ENCODE measurements at regions of chr20 and their contacts with region 1.

Region 1: GRCh38 chr20:21719592-21720214 is 14.2 kb downstream of the PAX1 start:
- DNase-seq: peak; percentile 33
- H3K4me3 ChIP-seq: no peak overlapping the region
- H3K27ac ChIP-seq: no peak overlapping the region
- H3K4me1 ChIP-seq: no peaks in the 10 kb centered on the region
- H3K27me3 ChIP-seq: peaks cover 12% of the 10 kb centered on the region
- CTCF ChIP-seq: peak; percentile 67 to 83

Region 2: GRCh38 chr20:21921251-21921650 is 201.5 kb after region 1 on chr20:
- CTCF ChIA-PET with region 1: no interaction called
- dilution Hi-C with region 1: no loop called
- in situ Hi-C with region 1: no loop called
- intact Hi-C with region 1: no loop called
- DNase-seq: no peak
- H3K4me3 ChIP-seq: no peak overlapping the region
- H3K27ac ChIP-seq: no peak overlapping the region
- H3K4me1 ChIP-seq: no peaks in the 10 kb centered on the region
- H3K27me3 ChIP-seq: no peaks in the 10 kb centered on the region
- CTCF ChIP-seq: no peak

Region 3: GRCh38 chr20:22127587-22127986 is 407.9 kb after region 1 on chr20:
- CTCF ChIA-PET with region 1: no interaction called
- dilution Hi-C with region 1: no loop called
- in situ Hi-C with region 1: no loop called
- intact Hi-C with region 1: no loop called
- DNase-seq: no peak
- H3K4me3 ChIP-seq: no peak overlapping the region
- H3K27ac ChIP-seq: no peak overlapping the region
- H3K4me1 ChIP-seq: no peaks in the 10 kb centered on the region
- H3K27me3 ChIP-seq: no peaks in the 10 kb centered on the region
- CTCF ChIP-seq: no peak

Region 4: DNA sequence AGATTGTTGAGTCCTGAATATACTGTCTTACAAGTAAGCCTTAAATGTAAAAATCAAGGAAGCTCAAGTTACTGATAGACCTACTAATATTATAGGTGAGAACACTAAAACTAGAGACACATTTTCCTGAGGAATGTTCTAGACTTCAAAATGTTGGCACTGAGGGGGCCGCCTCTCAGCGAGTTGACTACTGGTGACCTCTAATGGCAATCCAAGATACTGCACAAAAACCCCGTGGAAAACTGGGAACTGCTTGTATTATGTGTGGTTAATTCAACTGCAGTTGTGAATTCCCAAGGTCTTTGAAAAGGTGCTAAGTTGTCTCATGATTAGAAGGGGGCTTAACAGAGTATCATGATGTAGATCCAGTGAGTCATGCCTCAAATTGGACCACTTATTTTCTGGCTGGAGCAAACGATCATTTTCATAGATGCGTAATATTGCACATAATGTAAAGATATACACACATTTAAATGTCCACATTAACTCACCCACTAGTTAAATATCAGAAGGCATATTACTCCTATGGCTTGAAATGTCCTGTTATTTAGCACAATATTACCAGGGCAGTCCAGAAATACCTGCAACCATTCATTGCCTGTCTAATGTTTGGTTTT is 528.5 kb after region 1 on chr20:
- CTCF ChIA-PET with region 1: interaction called, 3 read pairs
- dilution Hi-C with region 1: no loop called
- in situ Hi-C with region 1: no loop called
- intact Hi-C with region 1: loop called (anchors 1 kb)
- DNase-seq: no peak
- H3K4me3 ChIP-seq: no peak overlapping the region
- H3K27ac ChIP-seq: no peak overlapping the region
- H3K4me1 ChIP-seq: no peaks in the 10 kb centered on the region
- H3K27me3 ChIP-seq: no peaks in the 10 kb centered on the region
- CTCF ChIP-seq: peak; percentile 39 to 70

Region 5: GRCh38 chr20:22652681-22653588 is 933.2 kb after region 1 on chr20:
- CTCF ChIA-PET with region 1: no interaction called
- dilution Hi-C with region 1: no loop called
- in situ Hi-C with region 1: loop called in 1 of 2 experiments (anchors 25 kb)
- intact Hi-C with region 1: no loop called
- DNase-seq: no peak
- H3K4me3 ChIP-seq: no peak overlapping the region
- H3K27ac ChIP-seq: no peak overlapping the region
- H3K4me1 ChIP-seq: no peaks in the 10 kb centered on the region
- H3K27me3 ChIP-seq: no peaks in the 10 kb centered on the region
- CTCF ChIP-seq: no peak

Region 6: GRCh38 chr20:22684072-22684762 is 964.5 kb after region 1 on chr20:
- CTCF ChIA-PET with region 1: no interaction called
- dilution Hi-C with region 1: no loop called
- in situ Hi-C with region 1: no loop called
- intact Hi-C with region 1: loop called (anchors 2 kb)
- DNase-seq: peak; percentile 54
- H3K4me3 ChIP-seq: no peak overlapping the region
- H3K27ac ChIP-seq: no peak overlapping the region
- H3K4me1 ChIP-seq: no peaks in the 10 kb centered on the region
- H3K27me3 ChIP-seq: no peaks in the 10 kb centered on the region
- CTCF ChIP-seq: peak; percentile 79 to 91